ENCODE measurements at regions of chr11 and their contacts with region 1.

Region 1: DNA sequence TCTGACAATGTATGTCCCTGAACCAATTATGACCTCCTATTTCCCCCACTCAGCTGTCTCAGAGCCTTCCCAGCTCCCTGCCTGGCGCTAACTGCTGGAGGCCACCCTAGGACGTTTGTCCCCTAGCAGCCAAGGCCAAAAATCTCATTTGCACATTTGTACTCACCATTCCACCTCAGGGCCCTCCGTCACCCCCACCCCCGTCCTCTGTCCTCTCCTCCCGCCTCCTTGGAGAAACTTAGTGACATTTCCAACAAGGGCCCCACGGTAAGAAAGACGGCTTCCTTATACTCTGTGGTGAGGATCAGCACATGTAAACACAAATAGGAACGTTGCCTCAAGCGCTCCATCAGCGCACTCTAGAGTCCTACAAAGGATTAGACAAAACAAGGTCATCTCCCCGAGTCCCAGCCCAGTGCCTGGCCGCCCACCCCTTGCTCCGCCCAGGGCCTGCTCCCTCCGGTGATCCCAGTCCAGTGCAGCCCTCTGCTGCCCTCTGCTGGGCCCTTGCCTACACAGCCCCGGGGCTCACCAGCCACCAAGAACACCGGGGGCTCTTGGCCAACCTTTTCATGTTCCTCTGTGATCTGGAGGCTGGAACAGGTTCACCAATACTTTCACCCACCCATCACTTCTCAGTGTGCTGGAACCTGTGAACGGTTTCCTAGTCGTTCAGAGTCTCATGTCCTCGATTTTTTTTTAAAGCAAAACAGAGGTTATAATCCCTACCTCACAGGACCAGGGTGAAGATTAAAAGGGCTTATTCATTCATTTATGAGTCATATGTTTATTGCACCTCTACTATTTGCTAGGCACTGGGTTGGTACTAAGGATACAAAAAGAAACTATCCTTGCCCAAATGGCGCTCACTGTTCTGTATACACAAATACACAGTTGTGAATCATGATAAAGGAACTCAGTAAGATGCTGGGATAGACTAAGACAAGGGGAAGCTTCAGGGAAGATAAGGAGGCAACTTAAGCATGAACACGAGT is 15.3 kb upstream of the CTR9 start:
- DNase-seq: peak; percentile 87 to 97 (median 94)

Region 2: GRCh38 chr11:10405855-10406592 is 329.8 kb before region 1 on chr11:
- intact Hi-C with region 1: loop called (anchors 2 kb)
- DNase-seq: peak; percentile 47 to 96 (median 82)

Region 3: GRCh38 chr11:10540923-10541560 is 194.7 kb before region 1 on chr11 and contains the start of gene RNF141:
- intact Hi-C with region 1: loop called (anchors 10 kb)
- DNase-seq: peak; percentile 90 to 99 (median 97)

Region 4: GRCh38 chr11:10606536-10607208 is 129.1 kb before region 1 on chr11:
- intact Hi-C with region 1: no loop called
- DNase-seq: peak in 1 of 42 donors; percentile 35

Measured in head of caudate nucleus (tissue), 42 donors.